Activated CD4-positive, alpha-beta T cell treated with anti-CD3 and anti-CD28 coated beads for 36 hours (primary cell): ENCODE measurements at regions of chr2 and their contacts with region 1.

Region 1: DNA sequence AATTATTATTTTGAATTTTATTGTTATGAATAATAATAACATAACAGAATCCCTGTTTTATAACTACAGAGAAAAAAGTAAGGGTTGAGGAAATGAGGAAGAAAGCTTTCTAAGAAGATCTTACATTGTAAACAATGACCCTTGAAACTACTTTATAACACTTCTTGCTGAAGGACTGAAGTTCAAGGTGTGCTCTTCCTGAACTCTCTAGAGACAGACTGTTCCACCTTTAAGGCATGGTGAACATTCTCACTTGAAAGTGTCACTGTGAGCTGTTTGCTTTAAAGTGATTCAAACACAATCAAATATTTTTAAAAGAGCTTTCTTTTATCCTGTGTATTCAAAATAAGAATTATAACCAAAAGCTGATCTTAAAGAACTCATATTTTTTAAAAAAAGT is 131.5 kb downstream of the DNAH7 start:
- DNase-seq: no peak
- ATAC-seq: no peak
- H3K4me3 Mint-ChIP-seq: no peak overlapping the region
- H3K27ac Mint-ChIP-seq: no peak overlapping the region
- H3K4me1 Mint-ChIP-seq: no peaks in the 10 kb centered on the region
- H3K27me3 Mint-ChIP-seq: peaks cover 2% of the 10 kb centered on the region

Region 2: DNA sequence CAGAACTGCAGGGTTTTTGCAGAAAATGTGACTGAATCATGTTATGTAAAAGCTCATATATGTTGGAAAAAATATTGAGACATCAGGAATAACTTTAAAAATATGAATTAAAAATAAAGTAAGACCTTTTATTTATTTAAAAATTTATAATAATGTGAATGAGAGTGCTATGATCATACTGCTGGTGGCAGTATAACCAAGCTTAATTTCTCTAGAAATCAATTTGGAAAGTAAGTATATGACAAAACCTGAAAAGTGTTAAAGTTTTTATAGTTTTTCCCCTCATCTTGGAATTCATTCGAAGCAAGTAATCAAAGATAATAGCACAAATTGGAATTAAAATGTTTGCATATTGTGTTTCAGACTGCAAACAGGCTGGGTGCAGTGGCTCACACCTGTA is 272.6 kb before region 1 on chr2:
- CTCF ChIA-PET with region 1: interaction called, 5 read pairs
- POLR2A ChIA-PET with region 1: no interaction called
- intact Hi-C with region 1: loop called (anchors 2 to 5 kb)
- DNase-seq: no peak
- ATAC-seq: no peak
- H3K4me3 Mint-ChIP-seq: no peak overlapping the region
- H3K27ac Mint-ChIP-seq: no peak overlapping the region
- H3K4me1 Mint-ChIP-seq: peaks cover 54% of the 10 kb centered on the region
- H3K27me3 Mint-ChIP-seq: no peaks in the 10 kb centered on the region

Region 3: GRCh38 chr2:196322973-196323810 is 386.0 kb after region 1 on chr2:
- CTCF ChIA-PET with region 1: no interaction called
- POLR2A ChIA-PET with region 1: no interaction called
- intact Hi-C with region 1: no loop called
- DNase-seq: no peak
- ATAC-seq: no peak
- H3K4me3 Mint-ChIP-seq: no peak overlapping the region
- H3K27ac Mint-ChIP-seq: no peak overlapping the region
- H3K4me1 Mint-ChIP-seq: no peaks in the 10 kb centered on the region
- H3K27me3 Mint-ChIP-seq: peaks cover 3% of the 10 kb centered on the region